ENCODE measurements at regions of chr19 and their contacts with region 1.

Region 1: GRCh38 chr19:38891771-38892170 is 7.6 kb downstream of the SIRT2 start:
- DNase-seq: no peak
- ATAC-seq: no peak
- H3K4me3 ChIP-seq: no peak overlapping the region
- H3K27ac ChIP-seq: no peak overlapping the region
- H3K4me1 ChIP-seq: no peaks in the 10 kb centered on the region
- CTCF ChIP-seq: no peak
- EP300 ChIP-seq: no peak
- POLR2A ChIP-seq: no peak
- RAD21 ChIP-seq: no peak

Region 2: GRCh38 chr19:38514812-38515633 is 376.7 kb before region 1 on chr19:
- CTCF ChIA-PET with region 1: interaction called, 23 read pairs
- POLR2A ChIA-PET with region 1: no interaction called
- DNase-seq: peak; percentile 83 to 98
- ATAC-seq: peak; percentile 78 to 94
- H3K4me3 ChIP-seq: no peak overlapping the region
- H3K27ac ChIP-seq: peak overlapping the region; percentile 15 to 54; a peak in 4 of 6 replicates
- H3K4me1 ChIP-seq: peaks cover 8% of the 10 kb centered on the region; the same call in 2 of the 3 replicates
- CTCF ChIP-seq: peak; percentile 99
- EP300 ChIP-seq: no peak
- POLR2A ChIP-seq: no peak
- RAD21 ChIP-seq: peak; percentile 98 to 99

Region 3: GRCh38 chr19:38729653-38730469 is 161.9 kb before region 1 on chr19:
- CTCF ChIA-PET with region 1: interaction called, 21 read pairs
- POLR2A ChIA-PET with region 1: no interaction called
- DNase-seq: peak; percentile 89 to 90
- ATAC-seq: peak; percentile 15 to 71; a peak in 5 of 6 replicates
- H3K4me3 ChIP-seq: no peak overlapping the region
- H3K27ac ChIP-seq: peak overlapping the region; percentile 53 to 84; a peak in 5 of 6 replicates
- H3K4me1 ChIP-seq: peaks cover 84% of the 10 kb centered on the region
- CTCF ChIP-seq: peak; percentile 98
- EP300 ChIP-seq: no peak
- POLR2A ChIP-seq: no peak
- RAD21 ChIP-seq: peak; percentile 81 to 87

Region 4: DNA sequence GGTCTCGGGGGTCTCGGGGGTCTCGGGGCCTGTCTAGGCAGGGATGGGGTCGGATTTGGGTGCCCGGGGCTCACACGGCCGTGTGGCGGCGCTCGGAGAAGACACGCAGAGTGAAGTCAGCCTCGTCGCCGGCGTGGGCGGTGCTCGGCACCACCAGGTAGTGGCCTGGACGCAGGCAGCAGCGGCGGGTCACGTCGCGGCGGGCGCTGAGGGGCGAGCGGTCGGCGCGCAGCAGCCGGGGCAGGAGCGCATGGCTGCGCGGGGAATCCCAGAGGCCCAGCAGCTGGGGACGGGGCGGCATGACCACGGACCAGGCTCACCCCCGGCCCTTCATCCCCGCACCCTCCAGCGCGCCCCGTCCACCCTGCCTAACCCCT is 155.7 kb before region 1 on chr19:
- CTCF ChIA-PET with region 1: interaction called, 21 read pairs
- POLR2A ChIA-PET with region 1: no interaction called
- DNase-seq: peak; percentile 80 to 81
- ATAC-seq: peak; percentile 11 to 53
- H3K4me3 ChIP-seq: peak overlapping the region; percentile 49
- H3K27ac ChIP-seq: peak overlapping the region; percentile 70 to 88
- H3K4me1 ChIP-seq: peaks cover 57% of the 10 kb centered on the region
- CTCF ChIP-seq: 0 out of 3 replicates have a peak, but pooled peaks have one; percentile 12
- EP300 ChIP-seq: no peak
- POLR2A ChIP-seq: peak; percentile 43; the same call in 1 of the 2 replicates
- RAD21 ChIP-seq: peak; percentile 13 to 43; a peak in 4 of 5 replicates

Region 5: GRCh38 chr19:38904581-38905539 is 13.1 kb after region 1 on chr19:
- CTCF ChIA-PET with region 1: interaction called, 21 read pairs
- POLR2A ChIA-PET with region 1: no interaction called
- DNase-seq: no peak
- ATAC-seq: peak in 1 of 2 experiments; percentile 4; a peak in 1 of 6 replicates
- H3K4me3 ChIP-seq: no peak overlapping the region
- H3K27ac ChIP-seq: 0 out of 6 replicates have a peak overlapping the region, but pooled peaks of 1 of the 2 experiments have one; percentile 8
- H3K4me1 ChIP-seq: peaks cover 16% of the 10 kb centered on the region
- CTCF ChIP-seq: no peak
- EP300 ChIP-seq: no peak
- POLR2A ChIP-seq: no peak
- RAD21 ChIP-seq: no peak

Region 6: GRCh38 chr19:38917516-38918491 is 26.0 kb after region 1 on chr19:
- CTCF ChIA-PET with region 1: interaction called, 27 read pairs
- POLR2A ChIA-PET with region 1: no interaction called
- DNase-seq: peak; percentile 75 to 90
- ATAC-seq: peak; percentile 72 to 84
- H3K4me3 ChIP-seq: no peak overlapping the region
- H3K27ac ChIP-seq: peak overlapping the region in 1 of 2 experiments; percentile 14; a peak in 1 of 6 replicates
- H3K4me1 ChIP-seq: 0 out of 3 replicates have a peak, but pooled peaks cover 5% of the 10 kb centered on the region
- CTCF ChIP-seq: peak; percentile 49
- EP300 ChIP-seq: no peak
- POLR2A ChIP-seq: no peak
- RAD21 ChIP-seq: peak; percentile 48 to 59

Region 7: GRCh38 chr19:39052243-39052746 is 160.5 kb after region 1 on chr19:
- CTCF ChIA-PET with region 1: no interaction called
- POLR2A ChIA-PET with region 1: no interaction called
- DNase-seq: peak; percentile 75 to 87
- ATAC-seq: peak; percentile 85 to 96
- H3K4me3 ChIP-seq: no peak overlapping the region
- H3K27ac ChIP-seq: peak overlapping the region; percentile 54 to 71
- H3K4me1 ChIP-seq: peaks cover 22% of the 10 kb centered on the region
- CTCF ChIP-seq: peak; percentile 99
- EP300 ChIP-seq: no peak
- POLR2A ChIP-seq: no peak
- RAD21 ChIP-seq: peak; percentile 98 to 99